ENCODE measurements at regions of chr16 and their contacts with region 1.

Region 1: GRCh38 chr16:70402916-70403659 is 35.8 kb downstream of the ST3GAL2 start:
- DNase-seq: no peak
- H3K4me3 Mint-ChIP-seq: no peak overlapping the region
- H3K27ac Mint-ChIP-seq: peak overlapping the region; percentile 89
- H3K4me1 Mint-ChIP-seq: peaks cover 41% of the 10 kb centered on the region
- H3K27me3 Mint-ChIP-seq: no peaks in the 10 kb centered on the region

Region 2: DNA sequence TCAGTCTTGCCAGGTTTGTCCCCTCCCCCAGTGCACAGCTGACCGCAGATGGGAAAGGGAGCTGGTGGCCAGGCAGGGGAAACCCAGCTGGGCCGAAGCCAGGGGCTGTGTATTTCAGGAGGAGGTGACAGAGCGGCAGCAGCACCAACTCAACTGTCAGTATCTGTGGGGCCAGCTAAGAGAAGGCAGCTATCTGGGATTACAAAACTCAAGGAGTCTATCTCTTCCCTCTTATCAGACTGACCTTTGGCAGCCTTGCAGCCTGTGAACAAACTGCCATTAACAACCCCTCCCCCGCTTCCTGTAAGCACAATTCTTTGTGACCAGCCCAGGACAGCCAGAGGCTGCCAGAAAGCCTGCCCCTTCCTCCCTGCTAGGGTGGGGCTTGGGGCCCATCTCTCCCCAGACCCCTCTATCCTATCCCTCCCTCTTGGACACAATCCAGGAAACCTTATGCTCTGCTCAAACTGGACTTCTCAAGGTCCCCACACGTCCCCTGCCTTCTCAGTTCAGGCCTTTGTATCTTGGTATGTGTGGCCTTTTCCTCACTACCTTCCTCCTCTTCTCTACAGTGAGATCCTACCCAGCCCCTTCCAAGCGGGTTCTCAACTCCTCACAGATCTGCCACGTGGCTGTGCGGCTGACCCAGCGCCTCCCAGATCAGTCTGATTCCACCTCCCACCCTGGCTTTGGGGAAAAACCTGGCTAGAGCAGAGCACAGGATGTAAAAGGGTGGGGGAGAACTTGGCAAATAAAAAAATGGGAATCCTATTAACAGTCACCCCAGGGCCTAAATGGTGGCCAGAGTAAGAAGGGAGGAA is 25.3 kb after region 1 on chr16:
- intact Hi-C with region 1: loop called (anchors 1 kb)
- DNase-seq: peak; percentile 83
- H3K4me3 Mint-ChIP-seq: peak overlapping the region; percentile 56
- H3K27ac Mint-ChIP-seq: peak overlapping the region; percentile 67
- H3K4me1 Mint-ChIP-seq: peaks cover 56% of the 10 kb centered on the region
- H3K27me3 Mint-ChIP-seq: no peaks in the 10 kb centered on the region

Region 3: GRCh38 chr16:70454222-70455034 is 51.3 kb after region 1 on chr16 and contains the start of gene FCSK:
- intact Hi-C with region 1: no loop called
- DNase-seq: peak; percentile 90
- H3K4me3 Mint-ChIP-seq: peak within 1 kb of the TSS; percentile 85
- H3K27ac Mint-ChIP-seq: peak within 1 kb of the TSS; percentile 88
- H3K4me1 Mint-ChIP-seq: peaks cover 14% of the 10 kb centered on the region
- H3K27me3 Mint-ChIP-seq: peaks cover 1% of the 10 kb centered on the region
- total RNA-seq, gene FCSK: 19.6 and 24.4 TPM in 2 replicates